Sciatic nerve (tissue), 2 donors: ENCODE measurements at regions of chr10 and their contacts with region 1.

Region 1: DNA sequence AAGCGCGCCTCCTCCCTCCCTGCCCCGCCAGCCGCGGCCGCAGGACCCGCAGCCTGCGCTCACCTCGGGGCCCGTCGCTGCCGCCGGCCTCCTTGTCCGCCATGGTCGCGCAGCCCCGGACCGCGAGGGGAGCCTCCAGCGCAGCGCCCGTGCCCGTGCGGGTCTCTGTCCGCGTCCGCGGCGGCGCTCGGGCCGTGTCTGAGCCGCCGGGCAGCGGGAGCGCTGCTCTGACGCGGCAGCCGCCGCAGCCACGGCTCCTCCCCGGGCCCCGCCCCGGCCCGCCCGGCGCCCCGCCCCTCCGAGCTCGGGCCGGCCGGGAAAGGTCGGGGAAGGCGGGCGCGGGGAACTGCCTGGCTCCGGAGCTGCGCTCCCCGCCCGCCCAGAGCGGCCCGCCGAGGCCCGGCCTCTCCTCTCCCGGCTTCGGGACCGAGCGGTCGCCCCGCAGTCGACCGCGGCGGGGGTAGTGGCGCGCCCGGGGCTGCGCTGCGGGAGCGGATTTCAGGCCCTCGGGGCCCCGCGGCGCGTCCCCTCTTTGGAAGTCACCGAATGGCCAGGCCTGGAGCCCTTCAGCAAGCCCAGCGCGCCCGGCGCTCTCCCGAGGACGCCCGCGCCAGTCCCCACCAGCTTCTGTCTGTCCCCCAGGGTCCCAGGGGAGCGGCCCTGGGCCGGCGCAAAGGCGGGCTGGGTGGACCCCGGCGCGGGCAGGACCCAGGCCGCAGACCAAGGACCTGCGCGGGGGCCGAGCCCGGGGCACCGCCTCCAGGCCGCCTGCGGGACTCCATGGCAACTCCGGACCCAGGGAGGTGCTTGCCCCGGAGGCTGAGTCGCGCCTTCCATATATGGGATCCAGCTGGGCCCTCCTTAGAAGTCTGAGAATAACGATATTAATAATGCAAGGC is at the start of gene HSPA12A:
- DNase-seq: peak; percentile 87
- ATAC-seq: peak; percentile 84
- total RNA-seq, gene HSPA12A: 139 TPM

Region 2: DNA sequence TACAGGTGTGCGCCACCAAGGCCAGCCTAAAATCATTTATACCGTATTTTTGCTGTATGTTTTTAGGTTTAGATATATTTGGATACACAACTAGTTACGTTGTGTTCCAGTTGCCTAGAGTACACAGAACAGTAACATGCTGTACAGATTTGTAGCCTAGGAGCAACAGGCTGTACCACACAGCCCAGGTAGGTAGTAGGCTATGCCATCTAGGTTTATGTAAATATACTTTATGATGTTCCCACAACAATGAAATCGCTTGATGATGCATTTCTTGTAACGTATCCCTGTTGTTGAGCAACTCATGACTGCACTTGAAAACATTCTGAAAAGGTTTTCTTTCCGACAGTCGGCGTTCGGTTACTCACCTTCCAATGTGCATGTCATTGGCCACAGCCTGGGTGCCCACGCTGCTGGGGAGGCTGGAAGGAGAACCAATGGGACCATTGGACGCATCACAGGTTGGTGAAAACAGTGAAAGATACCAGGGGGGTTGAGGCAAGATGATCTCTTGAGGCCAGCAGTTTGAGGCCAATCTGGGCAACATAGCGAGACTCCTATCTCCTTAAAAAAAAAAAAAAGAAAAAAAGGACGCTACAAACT is 189.1 kb before region 1 on chr10:
- intact Hi-C with region 1: no loop called
- DNase-seq: no peak
- ATAC-seq: no peak

Region 3: DNA sequence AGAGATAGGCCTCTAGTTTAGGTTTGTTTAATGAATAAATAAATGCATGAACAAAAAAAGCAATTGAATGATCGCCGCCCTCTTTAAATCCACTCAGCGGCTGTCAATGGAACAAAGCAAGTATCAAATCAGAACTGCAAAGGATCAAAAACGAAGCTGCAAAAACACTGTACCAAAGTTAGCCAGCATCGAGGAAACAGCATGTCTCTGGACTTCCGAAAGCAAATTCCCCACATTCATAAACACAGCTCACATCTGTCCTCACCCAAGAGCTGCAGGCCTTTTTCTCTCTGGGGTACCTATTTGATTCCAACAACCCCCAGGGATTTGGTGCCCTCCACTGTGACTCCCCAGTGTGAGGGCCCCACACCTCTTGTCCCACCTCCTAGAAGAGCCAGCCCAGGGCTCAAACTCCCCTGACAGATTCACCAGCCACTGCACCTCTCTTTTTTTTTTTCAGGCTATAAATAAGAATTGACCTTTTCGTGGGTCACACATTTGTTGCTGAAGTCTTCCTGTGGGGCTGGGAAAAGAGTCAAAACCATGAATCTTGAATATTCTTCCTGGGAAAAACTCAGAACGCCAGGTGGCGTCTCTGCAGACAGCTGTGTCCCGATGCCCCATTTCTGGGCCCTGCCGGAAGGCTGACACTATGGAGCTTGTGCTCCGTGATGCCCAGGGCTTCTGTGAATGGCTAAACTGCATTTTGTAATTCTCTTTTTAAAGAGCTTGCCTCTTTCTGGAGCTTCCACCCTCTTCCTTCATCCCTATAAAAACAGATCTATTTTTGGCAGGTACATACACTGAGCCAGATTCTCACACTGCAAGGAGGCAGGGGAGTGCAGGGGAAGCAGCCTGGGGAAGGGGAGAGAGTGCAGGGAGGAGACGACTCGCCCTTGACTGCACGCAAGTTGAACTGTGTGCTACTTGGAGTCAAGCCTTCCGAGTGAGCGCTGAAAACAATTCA is 52.0 kb before region 1 on chr10:
- intact Hi-C with region 1: loop called (anchors 1 kb)
- DNase-seq: no peak
- ATAC-seq: peak; percentile 73